ENCODE measurements at regions of chr7 and their contacts with region 1.

Region 1: GRCh38 chr7:116258734-116259133 is 48.4 kb downstream of the TES start:
- DNase-seq: peak; percentile 86

Region 2: GRCh38 chr7:116150588-116150987 is 108.1 kb before region 1 on chr7:
- in situ Hi-C with region 1: no loop called
- DNase-seq: no peak

Region 3: DNA sequence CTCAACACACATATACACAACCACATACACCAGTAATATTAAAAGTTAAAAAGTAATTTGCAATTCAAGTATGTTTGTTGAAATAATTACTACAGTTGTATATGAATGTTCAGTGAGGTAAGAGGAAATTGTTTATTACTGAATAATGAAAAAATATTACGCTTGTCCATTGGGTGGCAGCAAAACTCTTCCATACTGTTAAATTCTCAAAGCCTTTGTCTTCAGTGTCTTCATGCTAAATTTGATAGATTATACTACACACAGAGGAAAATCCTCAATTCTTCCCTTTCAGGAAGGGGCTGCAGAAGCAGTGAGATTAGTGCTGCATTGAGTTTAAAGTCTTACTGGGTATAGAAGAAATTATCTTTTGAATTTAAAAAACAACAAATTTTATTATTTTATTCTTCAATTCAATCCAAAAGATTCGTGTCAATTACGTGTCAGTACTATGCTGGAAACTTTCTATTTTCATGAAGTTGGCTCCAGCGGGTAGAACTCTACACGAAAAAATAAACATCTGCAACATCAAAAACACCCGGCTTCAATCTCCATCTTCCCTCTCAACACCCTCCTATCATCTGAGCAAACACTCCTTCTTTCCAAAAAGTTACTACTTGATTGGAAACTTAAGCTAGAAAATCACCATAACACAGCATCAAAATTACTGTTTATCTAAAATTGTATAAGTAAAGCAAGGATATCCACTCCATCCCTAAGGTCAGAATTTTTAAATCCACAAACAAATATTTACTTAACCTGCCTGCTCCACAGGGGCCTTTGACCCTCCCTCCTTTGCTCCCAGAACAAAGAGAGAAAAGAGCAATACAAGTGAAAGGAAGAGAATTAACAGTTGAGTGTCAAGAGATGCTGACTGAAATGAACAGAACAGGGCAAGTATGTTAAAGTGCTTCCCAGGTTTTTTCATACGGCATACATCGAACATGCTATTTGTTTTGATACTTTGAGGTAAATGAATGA is 85.4 kb before region 1 on chr7:
- in situ Hi-C with region 1: loop called (anchors 10 kb)
- DNase-seq: peak; percentile 82

Region 4: DNA sequence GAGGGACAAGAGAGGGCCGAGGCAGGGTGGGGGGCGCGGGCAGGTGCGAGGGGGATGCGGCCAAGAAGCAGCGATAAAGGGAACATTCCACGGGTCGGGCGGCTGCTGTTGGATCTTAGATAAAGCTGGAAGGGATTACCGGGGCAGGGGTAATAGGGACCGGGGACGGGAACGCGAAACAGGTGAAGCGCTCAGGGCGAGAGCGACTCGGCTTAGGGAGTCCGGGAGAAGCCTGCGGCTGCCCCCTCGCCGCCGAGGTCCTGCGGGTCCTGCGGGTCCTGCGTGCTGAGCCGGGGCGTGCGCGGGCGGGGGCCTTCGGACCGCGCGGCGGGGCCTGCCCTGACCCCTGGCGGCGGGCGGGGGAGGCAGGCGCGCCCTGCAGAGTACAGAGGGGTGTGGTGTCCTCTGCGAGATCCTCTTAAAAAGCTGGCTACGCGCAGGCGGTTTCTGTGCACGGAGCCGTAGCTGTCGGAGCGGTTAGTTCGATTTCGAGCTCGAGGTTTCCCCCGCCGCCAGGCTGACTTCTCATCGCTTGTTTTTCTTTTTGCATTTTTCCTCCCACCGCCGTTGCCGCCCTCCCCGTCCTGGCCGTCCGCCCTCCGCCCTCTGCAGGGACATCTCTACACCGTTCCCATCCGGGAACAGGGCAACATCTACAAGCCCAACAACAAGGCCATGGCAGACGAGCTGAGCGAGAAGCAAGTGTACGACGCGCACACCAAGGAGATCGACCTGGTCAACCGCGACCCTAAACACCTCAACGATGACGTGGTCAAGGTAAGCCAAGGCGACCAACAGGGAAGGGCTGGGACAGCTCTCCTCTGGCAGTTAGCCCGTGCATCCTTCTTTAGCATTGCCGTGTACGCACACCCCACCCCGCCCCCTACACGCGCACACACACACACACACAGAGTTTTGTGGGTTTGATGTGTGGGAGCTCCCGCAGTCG is 267.5 kb after region 1 on chr7:
- in situ Hi-C with region 1: loop called (anchors 10 kb)
- DNase-seq: peak; percentile 93

Region 5: DNA sequence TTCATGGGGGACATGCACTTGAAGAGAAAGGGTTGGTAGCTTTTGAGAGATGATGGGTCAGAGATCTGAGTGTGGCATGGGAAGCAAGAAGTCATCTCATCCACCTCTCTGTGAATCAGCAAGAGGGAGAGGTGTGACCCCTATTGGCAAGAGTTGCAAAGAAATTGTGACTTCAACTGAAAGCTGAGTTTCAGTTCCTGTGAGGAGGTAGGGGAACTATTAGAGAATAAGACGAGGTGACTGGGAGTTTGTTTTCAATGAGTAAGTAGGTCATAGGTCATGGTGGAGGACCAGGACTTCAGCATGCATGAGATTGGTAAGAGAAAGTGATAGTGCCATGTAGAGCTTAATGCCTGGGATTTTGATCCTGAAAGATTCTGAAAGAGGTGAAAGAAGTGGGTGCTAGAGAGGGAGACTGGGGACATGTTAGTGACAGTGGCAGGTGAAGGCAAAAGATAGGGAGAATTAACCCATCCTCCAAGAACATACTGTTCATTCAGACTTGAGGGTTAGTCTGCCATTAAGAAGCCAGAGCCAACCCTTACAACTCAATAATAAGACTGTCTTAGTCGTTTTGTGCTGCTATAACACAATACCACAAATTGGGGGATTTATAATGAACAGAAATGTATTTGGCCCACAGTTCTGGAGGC is 528.2 kb after region 1 on chr7:
- in situ Hi-C with region 1: loop called (anchors 25 kb)
- DNase-seq: peak; percentile 61

Measured in ACHN (cell line).